Spleen (tissue), 13 donors: ENCODE measurements at regions of chr13 and their contacts with region 1.

Region 1: GRCh38 chr13:102609696-102610095 is 12.9 kb downstream of the TPP2 start:
- DNase-seq: no peak
- H3K4me3 ChIP-seq: no peak overlapping the region
- H3K27ac ChIP-seq: no peak overlapping the region
- H3K4me1 ChIP-seq: peaks cover 0 to 65% (median 5%) of the 10 kb centered on the region in 6 donors
- H3K27me3 ChIP-seq: no peaks in the 10 kb centered on the region
- CTCF ChIP-seq: no peak
- POLR2A ChIP-seq: no peak

Region 2: GRCh38 chr13:102667911-102668310 is 58.2 kb after region 1 on chr13:
- intact Hi-C with region 1: loop called (anchors 10 kb)
- DNase-seq: no peak
- H3K4me3 ChIP-seq: no peak overlapping the region
- H3K27ac ChIP-seq: no peak overlapping the region
- H3K4me1 ChIP-seq: no peaks in the 10 kb centered on the region
- H3K27me3 ChIP-seq: no peaks in the 10 kb centered on the region
- CTCF ChIP-seq: no peak
- POLR2A ChIP-seq: no peak